Kidney (tissue), 22 donors: ENCODE measurements at regions of chr13 and their contacts with region 1.

Region 1: GRCh38 chr13:101144808-101145419 is 271.4 kb downstream of the NALCN start:
- DNase-seq: peak in 2 of 5 donors; percentile 63 to 77
- H3K4me3 ChIP-seq: no peak overlapping the region
- H3K27ac ChIP-seq: no peak overlapping the region
- H3K4me1 ChIP-seq: no peaks in the 10 kb centered on the region
- H3K27me3 ChIP-seq: no peaks in the 10 kb centered on the region
- CTCF ChIP-seq: peak; percentile 54

Region 2: DNA sequence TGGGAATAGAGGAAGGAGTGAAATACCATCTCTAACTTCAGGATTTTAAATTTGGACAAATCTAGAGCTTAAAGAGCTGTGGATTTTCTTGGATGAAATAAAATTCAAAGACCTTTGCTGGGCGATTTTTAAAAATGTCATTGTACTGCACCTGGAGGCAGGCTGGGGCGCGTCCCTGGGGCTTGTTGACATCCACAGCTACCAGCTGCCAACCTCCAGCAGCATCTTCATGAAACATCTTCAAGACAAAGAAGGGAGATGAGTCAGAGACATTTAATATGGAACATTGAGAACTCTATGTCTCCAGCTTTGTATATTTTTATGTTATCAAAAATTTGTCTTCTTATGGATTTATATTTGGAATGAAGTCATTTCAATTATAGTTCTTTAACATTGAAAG is 138.9 kb after region 1 on chr13:
- intact Hi-C with region 1: no loop called
- DNase-seq: no peak
- H3K4me3 ChIP-seq: no peak overlapping the region
- H3K27ac ChIP-seq: no peak overlapping the region
- H3K4me1 ChIP-seq: no peaks in the 10 kb centered on the region
- H3K27me3 ChIP-seq: no peaks in the 10 kb centered on the region
- CTCF ChIP-seq: no peak

Region 3: GRCh38 chr13:101757446-101758039 is 612.6 kb after region 1 on chr13:
- intact Hi-C with region 1: loop called (anchors 10 kb)
- DNase-seq: peak in 2 of 5 donors; percentile 50 to 51
- H3K4me3 ChIP-seq: no peak overlapping the region
- H3K27ac ChIP-seq: no peak overlapping the region
- H3K4me1 ChIP-seq: no peaks in the 10 kb centered on the region
- H3K27me3 ChIP-seq: no peaks in the 10 kb centered on the region
- CTCF ChIP-seq: peak; percentile 55